GM12878 (cell line): ENCODE measurements at regions of chr14 and their contacts with region 1.

Region 1: DNA sequence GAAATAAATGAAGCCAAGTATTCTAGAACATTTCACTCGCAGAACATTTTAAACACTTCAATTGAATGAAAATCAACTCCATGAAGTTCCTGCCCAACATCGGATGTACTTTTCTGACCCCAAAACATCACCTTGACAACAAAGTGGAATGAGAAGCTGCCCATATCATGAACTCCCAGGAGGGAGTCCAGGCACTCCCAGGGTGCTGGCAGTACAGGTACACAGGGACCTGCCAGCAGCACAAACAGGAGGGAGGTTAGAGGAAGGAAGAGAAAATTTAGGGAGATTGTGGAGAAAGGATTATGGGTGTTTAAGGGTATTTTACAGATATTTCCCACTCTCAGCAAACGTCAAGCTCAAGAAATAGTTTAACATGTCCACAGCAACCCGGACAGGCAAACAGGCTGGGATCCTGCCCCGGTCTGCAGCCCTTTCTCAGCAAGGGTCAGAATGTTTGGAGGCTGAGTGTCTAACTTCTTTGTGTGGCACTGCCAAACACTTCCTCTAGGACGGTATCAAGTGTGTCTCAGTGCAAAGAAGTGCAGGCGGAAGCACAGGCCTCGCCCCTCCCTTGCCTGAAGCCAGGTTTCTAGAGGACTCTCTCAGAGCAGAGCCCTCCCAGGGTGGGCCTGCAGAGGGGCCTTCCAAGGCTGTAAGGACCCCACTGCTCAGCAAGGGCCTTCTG is 72.2 kb downstream of the SETD3 start:
- DNase-seq: no peak
- ATAC-seq: no peak
- H3K4me3 ChIP-seq: no peak overlapping the region
- H3K27ac ChIP-seq: no peak overlapping the region
- H3K4me1 ChIP-seq: peaks cover 5% of the 10 kb centered on the region; the same call in 1 of the 2 replicates
- H3K27me3 ChIP-seq: no peaks in the 10 kb centered on the region
- CTCF ChIP-seq: no peak
- EP300 ChIP-seq: no peak
- POLR2A ChIP-seq: no peak
- RAD21 ChIP-seq: no peak

Region 2: DNA sequence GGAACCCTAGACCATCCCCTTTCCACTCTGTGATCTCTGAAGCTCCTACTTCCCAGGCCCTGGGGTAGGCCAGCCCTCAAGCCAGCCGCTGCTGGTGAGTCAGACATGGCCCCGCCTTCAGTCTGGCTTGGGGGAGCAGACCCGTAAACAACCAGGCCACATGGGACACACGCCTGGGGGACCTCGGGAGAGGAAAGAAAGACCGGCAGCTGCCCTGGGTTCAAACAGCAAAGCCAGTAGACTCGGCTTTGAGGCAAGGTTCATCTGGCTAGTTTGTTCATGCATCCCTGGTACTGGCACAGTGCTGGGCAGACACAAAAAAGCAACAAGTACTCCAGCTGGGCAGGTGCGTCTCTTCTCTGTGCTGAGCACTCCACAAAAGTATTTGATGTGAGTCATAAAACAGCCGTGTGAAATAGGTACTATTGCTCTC is 29.6 kb before region 1 on chr14:
- CTCF ChIA-PET with region 1: no interaction called
- POLR2A ChIA-PET with region 1: no interaction called
- RAD21 ChIA-PET with region 1: no interaction called
- SMC1A ChIA-PET with region 1: no interaction called
- in situ Hi-C with region 1: no loop called
- intact Hi-C with region 1: no loop called
- DNase-seq: no peak
- ATAC-seq: peak; percentile 34; the same call in 2 of the 3 replicates
- H3K4me3 ChIP-seq: no peak overlapping the region
- H3K27ac ChIP-seq: no peak overlapping the region
- H3K4me1 ChIP-seq: no peaks in the 10 kb centered on the region
- H3K27me3 ChIP-seq: no peaks in the 10 kb centered on the region; a peak in 1 of 4 replicates
- CTCF ChIP-seq: no peak
- EP300 ChIP-seq: no peak
- POLR2A ChIP-seq: no peak
- RAD21 ChIP-seq: no peak

Region 3: GRCh38 chr14:99436247-99437180 is 28.1 kb after region 1 on chr14:
- CTCF ChIA-PET with region 1: no interaction called
- POLR2A ChIA-PET with region 1: no interaction called
- RAD21 ChIA-PET with region 1: no interaction called
- SMC1A ChIA-PET with region 1: no interaction called
- in situ Hi-C with region 1: no loop called
- intact Hi-C with region 1: loop called (anchors 1 kb)
- DNase-seq: no peak
- ATAC-seq: no peak
- H3K4me3 ChIP-seq: no peak overlapping the region
- H3K27ac ChIP-seq: no peak overlapping the region; the same call in 1 of the 2 replicates
- H3K4me1 ChIP-seq: no peaks in the 10 kb centered on the region
- H3K27me3 ChIP-seq: no peaks in the 10 kb centered on the region
- CTCF ChIP-seq: no peak
- EP300 ChIP-seq: no peak
- POLR2A ChIP-seq: no peak
- RAD21 ChIP-seq: no peak